MCF 10A (cell line): ENCODE measurements at regions of chr21 and their contacts with region 1.

Region 1: DNA sequence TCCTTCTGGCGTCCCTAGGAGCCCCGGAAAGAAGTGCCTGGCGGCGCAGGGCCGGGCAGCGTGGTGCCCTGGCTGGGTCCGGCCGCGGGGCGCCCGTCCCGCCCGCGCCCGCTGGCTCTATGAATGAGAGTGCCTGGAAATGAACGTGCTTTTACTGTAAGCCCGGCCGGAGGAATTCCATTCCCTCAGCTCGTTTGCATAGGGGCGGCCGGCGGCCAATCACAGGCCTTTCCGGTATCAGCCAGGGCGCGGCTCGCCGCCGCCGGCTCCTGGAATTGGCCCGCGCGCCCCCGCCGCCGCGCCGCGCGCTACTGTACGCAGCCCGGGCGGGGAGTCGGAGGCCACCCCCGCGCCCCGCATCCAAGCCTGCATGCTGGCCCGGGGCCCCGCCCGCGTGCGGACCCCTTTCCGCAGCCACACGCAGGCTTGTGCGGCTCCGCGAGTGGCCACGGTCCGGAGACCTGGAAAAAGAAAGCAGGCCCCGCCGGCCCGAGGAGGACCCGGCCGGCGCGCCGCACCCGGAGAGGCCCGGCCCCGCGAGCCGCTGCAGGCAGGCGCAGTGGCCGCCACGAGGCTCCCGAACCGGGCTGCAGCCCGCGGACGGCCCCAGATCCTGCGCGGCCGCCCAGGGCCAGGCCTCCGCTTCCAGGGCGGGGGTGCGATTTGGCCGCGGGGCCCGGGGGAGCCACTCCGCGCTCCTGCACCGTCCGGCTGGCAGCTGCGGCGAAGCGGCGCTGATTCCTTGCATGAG is 160.4 kb downstream of the RUNX1 start:
- DNase-seq: peak; percentile 96
- H3K4me3 Mint-ChIP-seq: peak overlapping the region; percentile 99
- H3K27ac Mint-ChIP-seq: peak overlapping the region; percentile 91
- H3K4me1 Mint-ChIP-seq: peaks cover 4% of the 10 kb centered on the region
- H3K27me3 Mint-ChIP-seq: no peaks in the 10 kb centered on the region
- CTCF ChIP-seq: no peak

Region 2: GRCh38 chr21:34737107-34737506 is 151.6 kb before region 1 on chr21:
- CTCF ChIA-PET with region 1: interaction called, 6 read pairs
- POLR2A ChIA-PET with region 1: interaction called, 63 read pairs
- intact Hi-C with region 1: no loop called
- DNase-seq: peak; percentile 22
- H3K4me3 Mint-ChIP-seq: no peak overlapping the region
- H3K27ac Mint-ChIP-seq: peak overlapping the region; percentile 24
- H3K4me1 Mint-ChIP-seq: peaks cover 49% of the 10 kb centered on the region
- H3K27me3 Mint-ChIP-seq: no peaks in the 10 kb centered on the region
- CTCF ChIP-seq: no peak

Region 3: GRCh38 chr21:34795175-34795547 is 93.6 kb before region 1 on chr21:
- CTCF ChIA-PET with region 1: interaction called, 10 read pairs
- POLR2A ChIA-PET with region 1: interaction called, 972 read pairs
- intact Hi-C with region 1: no loop called
- DNase-seq: peak; percentile 43
- H3K4me3 Mint-ChIP-seq: peak overlapping the region; percentile 49
- H3K27ac Mint-ChIP-seq: peak overlapping the region; percentile 96
- H3K4me1 Mint-ChIP-seq: peaks cover 44% of the 10 kb centered on the region
- H3K27me3 Mint-ChIP-seq: no peaks in the 10 kb centered on the region
- CTCF ChIP-seq: no peak

Region 4: GRCh38 chr21:34845521-34846451 is 43.0 kb before region 1 on chr21:
- CTCF ChIA-PET with region 1: interaction called, 22 read pairs
- POLR2A ChIA-PET with region 1: interaction called, 274 read pairs
- intact Hi-C with region 1: loop called (anchors 2 kb)
- DNase-seq: peak; percentile 94
- H3K4me3 Mint-ChIP-seq: peak overlapping the region; percentile 60
- H3K27ac Mint-ChIP-seq: peak overlapping the region; percentile 92
- H3K4me1 Mint-ChIP-seq: peaks cover 47% of the 10 kb centered on the region
- H3K27me3 Mint-ChIP-seq: no peaks in the 10 kb centered on the region
- CTCF ChIP-seq: no peak

Region 5: GRCh38 chr21:34900376-34900775 is 11.6 kb after region 1 on chr21:
- CTCF ChIA-PET with region 1: interaction called, 19 read pairs
- POLR2A ChIA-PET with region 1: interaction called, 4 read pairs
- intact Hi-C with region 1: no loop called
- DNase-seq: no peak
- H3K4me3 Mint-ChIP-seq: no peak overlapping the region
- H3K27ac Mint-ChIP-seq: no peak overlapping the region
- H3K4me1 Mint-ChIP-seq: no peaks in the 10 kb centered on the region
- H3K27me3 Mint-ChIP-seq: no peaks in the 10 kb centered on the region
- CTCF ChIP-seq: no peak

Region 6: GRCh38 chr21:34996304-34997101 is 107.8 kb after region 1 on chr21:
- CTCF ChIA-PET with region 1: no interaction called
- POLR2A ChIA-PET with region 1: no interaction called
- intact Hi-C with region 1: no loop called
- DNase-seq: no peak
- H3K4me3 Mint-ChIP-seq: no peak overlapping the region
- H3K27ac Mint-ChIP-seq: no peak overlapping the region
- H3K4me1 Mint-ChIP-seq: no peaks in the 10 kb centered on the region
- H3K27me3 Mint-ChIP-seq: no peaks in the 10 kb centered on the region
- CTCF ChIP-seq: no peak

Region 7: GRCh38 chr21:35400233-35400957 is 511.7 kb after region 1 on chr21:
- CTCF ChIA-PET with region 1: interaction called, 15 read pairs
- POLR2A ChIA-PET with region 1: interaction called, 45 read pairs
- intact Hi-C with region 1: loop called (anchors 1 kb)
- DNase-seq: peak; percentile 74
- H3K4me3 Mint-ChIP-seq: no peak overlapping the region
- H3K27ac Mint-ChIP-seq: peak overlapping the region; percentile 10
- H3K4me1 Mint-ChIP-seq: peaks cover 17% of the 10 kb centered on the region
- H3K27me3 Mint-ChIP-seq: no peaks in the 10 kb centered on the region
- CTCF ChIP-seq: peak; percentile 65

Region 8: GRCh38 chr21:35940074-35940927 is 1051.6 kb after region 1 on chr21:
- CTCF ChIA-PET with region 1: interaction called, 5 read pairs
- POLR2A ChIA-PET with region 1: no interaction called
- intact Hi-C with region 1: loop called (anchors 1 kb)
- DNase-seq: peak; percentile 74
- H3K4me3 Mint-ChIP-seq: no peak overlapping the region
- H3K27ac Mint-ChIP-seq: no peak overlapping the region
- H3K4me1 Mint-ChIP-seq: no peaks in the 10 kb centered on the region
- H3K27me3 Mint-ChIP-seq: no peaks in the 10 kb centered on the region
- CTCF ChIP-seq: peak; percentile 66